ENCODE measurements at regions of chr19 and their contacts with region 1.

Region 1: GRCh38 chr19:4916292-4917082 is 7.2 kb downstream of the UHRF1 start:
- DNase-seq: no peak
- H3K4me3 ChIP-seq: no peak overlapping the region
- H3K27ac ChIP-seq: no peak overlapping the region
- H3K4me1 ChIP-seq: peaks cover 25% of the 10 kb centered on the region
- H3K27me3 ChIP-seq: no peaks in the 10 kb centered on the region
- CTCF ChIP-seq: no peak

Region 2: GRCh38 chr19:5216141-5216847 is 299.8 kb after region 1 on chr19:
- CTCF ChIA-PET with region 1: no interaction called
- POLR2A ChIA-PET with region 1: no interaction called
- intact Hi-C with region 1: no loop called
- DNase-seq: no peak
- H3K4me3 ChIP-seq: no peak overlapping the region
- H3K27ac ChIP-seq: no peak overlapping the region
- H3K4me1 ChIP-seq: no peaks in the 10 kb centered on the region
- H3K27me3 ChIP-seq: no peaks in the 10 kb centered on the region
- CTCF ChIP-seq: no peak

Region 3: DNA sequence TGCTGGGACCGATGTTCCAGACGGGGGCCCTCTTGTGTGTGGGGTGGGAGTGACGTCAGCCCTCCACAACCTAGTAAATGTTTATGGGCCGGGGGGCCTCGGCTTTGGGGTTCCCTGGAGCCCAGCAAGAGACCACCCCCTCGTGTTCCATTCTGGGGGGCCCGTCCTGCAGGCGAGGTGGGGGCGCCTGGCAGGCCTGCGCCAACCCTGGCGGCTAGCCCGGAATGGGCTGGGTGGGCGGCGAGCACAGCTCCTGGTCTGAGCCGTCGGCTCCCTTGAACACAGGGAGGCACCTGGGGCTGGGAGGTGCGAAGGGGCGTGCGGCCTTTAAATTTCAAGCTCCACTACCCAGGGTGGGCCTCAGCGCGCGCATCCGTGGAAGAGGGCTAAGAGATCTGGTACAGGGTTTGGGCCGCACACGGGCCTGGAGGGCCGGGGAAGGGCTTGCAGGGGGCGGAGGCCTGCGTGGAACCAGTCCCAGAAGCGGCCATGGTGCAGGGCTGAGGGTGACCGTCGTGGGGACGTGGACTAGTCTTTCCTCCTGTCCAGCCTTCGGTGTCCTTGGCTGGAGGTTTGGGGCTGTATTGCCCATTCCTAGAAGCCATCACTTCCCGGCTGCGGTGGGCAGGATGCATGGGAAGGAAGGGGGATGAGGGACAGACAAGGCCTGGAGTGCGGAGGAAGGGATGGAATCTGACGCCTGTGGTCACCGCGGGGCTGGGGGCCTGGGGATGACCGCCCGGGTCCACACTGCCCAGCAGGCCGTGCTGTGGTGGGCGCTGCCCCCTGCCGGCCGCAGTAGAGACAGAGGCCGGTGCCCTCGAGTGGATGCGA is 975.7 kb after region 1 on chr19:
- CTCF ChIA-PET with region 1: no interaction called
- POLR2A ChIA-PET with region 1: interaction called, 10 read pairs
- intact Hi-C with region 1: no loop called
- DNase-seq: no peak
- H3K4me3 ChIP-seq: no peak overlapping the region
- H3K27ac ChIP-seq: no peak overlapping the region
- H3K4me1 ChIP-seq: peaks cover 16% of the 10 kb centered on the region
- H3K27me3 ChIP-seq: no peaks in the 10 kb centered on the region
- CTCF ChIP-seq: peak; percentile 76

Measured in A673 (cell line).